Endothelial cell of umbilical vein (primary cell): ENCODE measurements at regions of chr1 and their contacts with region 1.

Region 1: GRCh38 chr1:40849801-40850592 is 12.2 kb downstream of the CITED4 start:
- DNase-seq: peak; percentile 60
- H3K4me3 ChIP-seq: no peak overlapping the region
- H3K27ac ChIP-seq: no peak overlapping the region
- H3K4me1 ChIP-seq: peaks cover 3% of the 10 kb centered on the region
- H3K27me3 ChIP-seq: peaks cover 14 to 17% of the 10 kb centered on the region in 2 experiments
- CTCF ChIP-seq: peak; percentile 80 to 86
- POLR2A ChIP-seq: no peak

Region 2: DNA sequence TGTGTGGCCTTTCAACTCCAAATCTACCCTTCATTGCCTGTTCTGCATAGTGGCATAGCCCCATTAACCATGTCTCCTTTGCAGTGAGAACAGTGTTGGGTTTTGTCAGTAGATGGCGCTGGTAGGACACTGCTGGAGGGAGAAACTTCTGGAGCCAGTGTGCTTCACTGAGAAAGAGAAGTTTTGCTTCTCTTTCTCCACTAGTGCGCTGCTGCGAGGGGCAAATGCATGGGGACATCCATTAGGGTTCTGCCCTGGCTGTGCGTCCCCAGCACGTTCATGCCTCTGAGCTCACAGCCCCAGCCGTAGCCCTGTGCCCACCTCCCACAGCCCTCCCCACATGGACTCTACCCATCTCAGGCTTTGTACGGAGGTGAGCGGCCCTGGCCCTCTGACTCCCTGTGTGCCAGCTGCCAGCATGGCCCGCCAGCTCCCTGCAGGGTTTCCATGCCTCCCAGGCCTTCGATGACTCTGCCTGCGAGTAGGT is 237.6 kb before region 1 on chr1:
- CTCF ChIA-PET with region 1: no interaction called
- POLR2A ChIA-PET with region 1: no interaction called
- dilution Hi-C with region 1: no loop called
- intact Hi-C with region 1: loop called (anchors 2 kb)
- DNase-seq: peak; percentile 71
- H3K4me3 ChIP-seq: no peak overlapping the region
- H3K27ac ChIP-seq: no peak overlapping the region
- H3K4me1 ChIP-seq: no peaks in the 10 kb centered on the region
- H3K27me3 ChIP-seq: peaks cover 1 to 11% of the 10 kb centered on the region in 2 experiments
- CTCF ChIP-seq: peak; percentile 75 to 81
- POLR2A ChIP-seq: no peak

Region 3: DNA sequence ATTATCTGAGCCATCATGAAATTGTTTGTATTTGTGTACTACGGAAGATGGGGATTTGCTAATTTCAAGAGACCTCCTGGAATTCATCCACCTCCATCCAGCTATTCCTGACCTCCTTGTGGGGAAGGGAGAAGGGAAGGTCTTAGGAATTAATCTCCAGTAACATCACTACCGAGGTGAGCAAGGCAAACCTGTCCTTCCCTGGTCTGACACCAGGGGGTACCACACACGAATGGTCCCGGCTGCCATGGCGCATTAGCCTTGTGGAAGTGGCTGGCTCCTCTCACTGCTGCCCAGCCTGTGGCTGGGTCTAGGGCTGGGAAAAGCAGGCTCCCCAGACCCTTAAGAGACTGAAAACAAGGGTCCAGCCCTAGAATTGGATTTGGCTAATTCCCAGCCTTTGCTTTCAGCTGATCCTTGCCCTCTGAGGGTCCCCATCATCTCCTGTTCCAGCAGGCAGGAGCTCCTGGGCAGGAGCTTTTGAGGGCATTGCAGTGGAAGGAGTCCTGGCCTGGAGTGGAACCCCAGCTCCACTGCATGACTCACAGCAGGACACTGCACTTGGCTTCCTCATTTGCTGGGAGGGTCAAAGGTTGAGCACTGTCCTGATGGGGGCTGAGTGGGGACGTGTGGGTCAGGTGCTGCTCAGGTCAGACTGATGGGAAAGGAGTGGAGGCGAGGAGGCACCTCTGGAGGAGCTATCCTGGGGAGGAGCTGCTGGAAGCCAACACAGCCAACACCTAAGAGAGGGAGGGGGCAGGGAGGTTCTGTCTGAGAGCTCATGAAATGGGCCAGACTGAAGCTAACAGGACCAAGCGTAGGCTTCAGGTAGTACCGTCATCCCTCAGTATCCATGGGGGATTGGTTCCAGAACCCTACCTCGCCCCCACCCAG is 219.3 kb before region 1 on chr1:
- CTCF ChIA-PET with region 1: interaction called, 17 read pairs
- POLR2A ChIA-PET with region 1: no interaction called
- dilution Hi-C with region 1: no loop called
- intact Hi-C with region 1: no loop called
- DNase-seq: peak; percentile 51
- H3K4me3 ChIP-seq: no peak overlapping the region
- H3K27ac ChIP-seq: no peak overlapping the region
- H3K4me1 ChIP-seq: no peaks in the 10 kb centered on the region
- H3K27me3 ChIP-seq: peaks cover 0 to 4% of the 10 kb centered on the region in 2 experiments
- CTCF ChIP-seq: peak; percentile 62 to 73
- POLR2A ChIP-seq: no peak

Region 4: GRCh38 chr1:40668769-40669525 is 181.1 kb before region 1 on chr1:
- CTCF ChIA-PET with region 1: interaction called, 6 read pairs
- POLR2A ChIA-PET with region 1: no interaction called
- dilution Hi-C with region 1: no loop called
- intact Hi-C with region 1: loop called (anchors 5 kb)
- DNase-seq: peak; percentile 78
- H3K4me3 ChIP-seq: no peak overlapping the region
- H3K27ac ChIP-seq: no peak overlapping the region
- H3K4me1 ChIP-seq: no peaks in the 10 kb centered on the region
- H3K27me3 ChIP-seq: peaks cover 16 to 20% of the 10 kb centered on the region in 2 experiments
- CTCF ChIP-seq: peak; percentile 87 to 91
- POLR2A ChIP-seq: no peak

Region 5: GRCh38 chr1:40691538-40692428 is 158.2 kb before region 1 on chr1 and contains the start of gene NFYC:
- CTCF ChIA-PET with region 1: no interaction called
- POLR2A ChIA-PET with region 1: no interaction called
- dilution Hi-C with region 1: no loop called
- intact Hi-C with region 1: loop called (anchors 5 kb)
- DNase-seq: peak; percentile 98
- H3K4me3 ChIP-seq: peak within 1 kb of the TSS; percentile 37 to 95 (median 78)
- H3K27ac ChIP-seq: peak within 1 kb of the TSS; percentile 68
- H3K4me1 ChIP-seq: peaks cover 19% of the 10 kb centered on the region
- H3K27me3 ChIP-seq: no peaks in the 10 kb centered on the region
- CTCF ChIP-seq: no peak
- POLR2A ChIP-seq: peak; percentile 76
- total RNA-seq, gene NFYC: 44.0 and 51.1 TPM in 2 replicates

Region 6: DNA sequence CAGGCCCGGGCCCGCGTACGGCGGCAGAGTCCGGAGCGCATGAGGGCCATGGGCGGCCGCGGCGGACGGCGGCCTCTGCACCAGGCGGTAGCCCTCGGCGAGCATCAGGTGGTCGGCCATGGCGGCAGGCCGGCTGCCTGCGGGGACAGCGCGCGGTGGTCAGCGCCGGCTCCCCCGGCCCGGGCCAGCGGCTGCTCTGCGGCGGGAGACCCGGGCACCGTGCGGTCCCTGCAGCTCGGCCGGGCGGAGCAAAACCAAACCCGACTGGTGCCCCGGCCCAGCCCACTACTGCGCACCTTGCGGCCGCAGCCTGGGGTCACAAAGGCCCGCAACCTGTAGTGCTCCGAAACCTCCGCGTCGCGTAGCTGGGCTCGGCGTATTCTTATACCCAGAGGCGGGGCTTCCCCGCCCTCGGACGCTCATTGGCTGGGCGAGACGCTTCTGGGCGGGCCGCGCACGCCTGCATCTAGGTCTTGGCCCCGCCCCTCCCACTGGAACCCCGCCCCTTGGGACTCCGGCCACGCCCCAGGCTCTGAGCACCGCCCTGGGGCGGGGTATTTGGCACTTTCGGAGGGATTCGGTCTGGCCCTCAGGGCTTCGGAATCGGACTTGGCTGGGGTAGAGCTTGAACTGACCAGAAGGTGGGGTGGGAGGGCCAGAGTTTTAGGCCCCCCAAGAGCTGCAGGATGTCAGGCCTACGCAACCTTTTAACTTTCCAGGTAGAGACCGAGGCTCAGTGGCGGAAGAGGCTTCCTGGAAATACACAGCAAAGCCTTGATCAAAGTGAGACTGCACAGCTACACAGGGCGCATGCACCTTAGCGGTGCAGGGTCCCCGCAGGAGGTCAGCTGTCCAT is 12.2 kb after region 1 on chr1 and contains the start of gene CITED4:
- CTCF ChIA-PET with region 1: interaction called, 15 read pairs
- POLR2A ChIA-PET with region 1: interaction called, 3 read pairs
- dilution Hi-C with region 1: no loop called
- intact Hi-C with region 1: no loop called
- DNase-seq: peak; percentile 94
- H3K4me3 ChIP-seq: peak within 1 kb of the TSS; percentile 39 to 52 (median 47)
- H3K27ac ChIP-seq: peak within 1 kb of the TSS; percentile 4
- H3K4me1 ChIP-seq: peaks cover 10% of the 10 kb centered on the region
- H3K27me3 ChIP-seq: no peaks in the 10 kb centered on the region
- CTCF ChIP-seq: no peak
- POLR2A ChIP-seq: peak; percentile 94
- total RNA-seq, gene CITED4: 10.9 and 11.3 TPM in 2 replicates

Region 7: GRCh38 chr1:40965529-40965928 is 115.5 kb after region 1 on chr1:
- CTCF ChIA-PET with region 1: no interaction called
- POLR2A ChIA-PET with region 1: no interaction called
- dilution Hi-C with region 1: no loop called
- intact Hi-C with region 1: no loop called
- DNase-seq: no peak
- H3K4me3 ChIP-seq: no peak overlapping the region
- H3K27ac ChIP-seq: no peak overlapping the region
- H3K4me1 ChIP-seq: peaks cover 11% of the 10 kb centered on the region
- H3K27me3 ChIP-seq: no peaks in the 10 kb centered on the region
- CTCF ChIP-seq: no peak
- POLR2A ChIP-seq: no peak

Region 8: GRCh38 chr1:41122851-41123507 is 273.0 kb after region 1 on chr1:
- CTCF ChIA-PET with region 1: no interaction called
- POLR2A ChIA-PET with region 1: no interaction called
- dilution Hi-C with region 1: no loop called
- intact Hi-C with region 1: loop called (anchors 5 kb)
- DNase-seq: peak; percentile 68
- H3K4me3 ChIP-seq: no peak overlapping the region
- H3K27ac ChIP-seq: no peak overlapping the region
- H3K4me1 ChIP-seq: no peaks in the 10 kb centered on the region
- H3K27me3 ChIP-seq: no peaks in the 10 kb centered on the region
- CTCF ChIP-seq: peak; percentile 45 to 48
- POLR2A ChIP-seq: no peak